Transverse colon (tissue), 4 donors: ENCODE measurements at regions of chr14 and their contacts with region 1.

Region 1: DNA sequence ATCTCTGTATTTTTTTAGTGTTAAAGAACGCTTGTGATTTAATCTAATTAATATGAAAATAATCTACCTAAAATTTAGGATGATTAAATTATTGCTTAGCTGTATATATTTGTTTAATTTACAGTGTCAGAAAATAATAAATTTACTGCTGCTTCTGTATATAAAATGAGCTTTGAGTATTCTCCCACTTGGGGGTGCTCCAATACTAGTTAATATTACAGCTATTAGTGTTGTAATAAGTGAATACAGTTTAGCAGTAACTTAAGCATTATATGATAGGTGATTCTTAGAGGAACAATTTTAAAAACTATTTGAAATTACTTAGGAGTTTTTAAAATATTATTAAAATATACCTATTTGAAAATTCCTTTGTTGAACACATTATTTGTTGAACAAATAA is 62.2 kb downstream of the PAPOLA start:
- DNase-seq: no peak
- H3K4me3 ChIP-seq: no peak overlapping the region
- H3K27ac ChIP-seq: no peak overlapping the region
- H3K4me1 ChIP-seq: no peaks in the 10 kb centered on the region
- H3K27me3 ChIP-seq: no peaks in the 10 kb centered on the region
- CTCF ChIP-seq: no peak
- EP300 ChIP-seq: no peak
- POLR2A ChIP-seq: no peak

Region 2: DNA sequence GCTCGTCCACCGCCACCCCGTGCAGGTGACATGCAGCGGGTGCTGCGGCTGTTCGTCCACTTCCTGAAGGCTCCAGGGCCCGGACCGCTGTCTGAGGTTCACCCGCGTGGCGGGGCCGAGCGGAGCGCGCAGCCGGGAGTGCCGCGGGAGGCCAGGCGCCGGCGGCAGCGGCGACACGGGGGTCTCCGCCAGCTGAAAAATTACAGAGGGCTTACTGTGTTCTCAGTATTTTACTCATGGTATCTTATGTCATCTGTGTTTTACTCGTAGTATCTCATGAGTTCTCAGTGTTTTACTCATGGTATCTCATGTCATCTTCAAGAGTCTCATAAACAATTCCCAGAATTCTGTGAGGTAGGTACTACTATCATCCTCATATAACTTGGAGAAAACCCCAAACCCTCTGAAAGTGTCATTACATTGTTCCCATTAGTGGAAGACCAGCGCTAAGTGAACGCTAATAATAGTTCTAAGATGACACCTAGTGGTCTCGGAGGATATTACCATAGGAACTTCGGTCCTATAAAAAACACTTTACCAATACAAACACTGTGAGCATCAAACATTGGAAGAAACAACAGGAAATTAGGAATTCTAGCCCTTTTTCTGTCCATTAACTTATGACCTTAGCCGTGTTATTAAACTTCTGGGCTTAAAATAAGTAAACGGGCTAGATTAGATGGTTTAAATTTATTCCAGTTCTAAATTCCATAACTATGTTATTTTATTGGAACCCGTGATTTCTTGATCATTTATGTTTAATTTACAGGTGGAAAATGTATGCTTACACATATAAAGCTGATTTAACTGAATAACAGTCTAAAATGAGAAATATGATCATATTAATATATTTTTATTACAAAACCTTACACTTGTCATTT is 140.0 kb before region 1 on chr14:
- in situ Hi-C with region 1: no loop called
- intact Hi-C with region 1: no loop called
- DNase-seq: peak; percentile 48
- H3K4me3 ChIP-seq: peak overlapping the region; percentile 12 to 63 (median 38)
- H3K27ac ChIP-seq: peak overlapping the region in 2 of 4 donors; percentile 14 to 31
- H3K4me1 ChIP-seq: peaks cover 0 to 11% (median 3%) of the 10 kb centered on the region in 4 donors
- H3K27me3 ChIP-seq: no peaks in the 10 kb centered on the region
- CTCF ChIP-seq: peak; percentile 78 to 91 (median 82)
- EP300 ChIP-seq: no peak
- POLR2A ChIP-seq: no peak

Region 3: DNA sequence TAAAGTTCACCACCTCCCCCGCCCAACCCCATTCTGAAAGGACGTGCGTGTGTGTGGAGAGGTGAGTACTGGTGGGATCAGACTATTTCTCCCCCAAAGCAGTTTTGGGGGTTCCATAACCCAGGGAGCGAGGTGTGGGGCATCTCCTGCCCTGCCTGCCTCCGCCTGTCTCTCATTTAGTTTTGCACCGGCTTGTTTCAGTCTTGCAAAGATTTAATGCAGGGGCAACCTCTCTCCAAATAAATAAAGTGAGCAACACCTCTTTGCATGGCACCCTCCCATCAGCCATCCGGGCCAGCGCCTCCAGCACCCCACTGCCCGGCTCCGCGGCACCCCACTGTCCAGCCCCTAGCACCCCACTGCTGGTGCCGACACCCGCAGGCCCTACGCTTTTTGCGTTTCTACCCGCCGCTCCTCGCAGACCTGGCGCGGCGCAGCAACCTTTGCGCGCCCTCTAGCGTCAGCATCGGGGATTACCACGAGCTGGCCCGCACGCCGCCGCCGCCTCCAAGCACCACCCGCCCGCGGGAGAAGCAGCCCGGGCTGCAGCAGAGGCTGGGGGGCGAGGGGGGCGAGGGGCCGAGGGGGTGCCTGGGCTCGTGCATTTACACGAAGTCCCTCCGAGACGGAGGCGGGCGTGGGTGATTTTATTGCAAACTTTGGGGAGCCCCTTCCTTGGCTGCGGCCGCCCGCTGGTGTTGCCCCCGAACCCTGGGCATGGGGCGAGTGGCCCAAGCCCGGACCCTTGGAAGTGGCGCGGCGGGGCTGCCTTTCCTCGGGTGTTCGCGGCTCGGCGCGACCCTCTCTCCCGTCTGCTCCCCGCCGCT is 177.0 kb after region 1 on chr14:
- in situ Hi-C with region 1: no loop called
- intact Hi-C with region 1: loop called (anchors 5 kb)
- DNase-seq: peak; percentile 49
- H3K4me3 ChIP-seq: peak overlapping the region in 2 of 4 donors; percentile 19 to 43
- H3K27ac ChIP-seq: no peak overlapping the region
- H3K4me1 ChIP-seq: peaks cover 0 to 9% (median 5%) of the 10 kb centered on the region in 4 donors
- H3K27me3 ChIP-seq: peaks cover 91% of the 10 kb centered on the region
- CTCF ChIP-seq: peak; percentile 54 to 96 (median 92)
- EP300 ChIP-seq: no peak
- POLR2A ChIP-seq: no peak

Region 4: GRCh38 chr14:96772929-96773328 is 208.5 kb after region 1 on chr14:
- in situ Hi-C with region 1: no loop called
- intact Hi-C with region 1: no loop called
- DNase-seq: no peak
- H3K4me3 ChIP-seq: no peak overlapping the region
- H3K27ac ChIP-seq: no peak overlapping the region
- H3K4me1 ChIP-seq: no peaks in the 10 kb centered on the region
- H3K27me3 ChIP-seq: peaks cover 11% of the 10 kb centered on the region
- CTCF ChIP-seq: no peak
- EP300 ChIP-seq: no peak
- POLR2A ChIP-seq: no peak